Vagina (tissue), 2 donors: ENCODE measurements at regions of chr10 and their contacts with region 1.

Region 1: DNA sequence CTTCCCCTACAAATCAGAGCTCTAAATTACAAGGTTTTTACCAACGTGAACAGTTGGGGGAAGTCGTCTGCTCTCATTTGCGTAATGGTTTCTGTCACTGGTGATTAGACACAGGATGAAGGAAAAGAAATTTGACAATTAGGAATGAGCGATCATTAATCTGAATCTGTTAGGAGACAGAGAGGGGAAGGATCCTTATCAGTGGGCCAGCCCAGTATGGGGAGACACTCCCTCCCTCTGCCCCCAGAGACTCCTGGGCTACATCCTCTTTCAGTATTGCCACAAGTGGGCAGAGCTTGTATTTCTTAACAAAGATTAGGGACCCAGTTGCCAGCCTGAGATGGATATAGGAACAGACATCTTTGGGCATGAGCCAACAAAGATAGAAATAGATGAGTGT is 15.5 kb downstream of the HIF1AN start:
- DNase-seq: no peak
- H3K4me3 ChIP-seq: no peak overlapping the region
- H3K27ac ChIP-seq: no peak overlapping the region
- H3K4me1 ChIP-seq: no peaks in the 10 kb centered on the region
- H3K27me3 ChIP-seq: no peaks in the 10 kb centered on the region
- CTCF ChIP-seq: no peak
- POLR2A ChIP-seq: no peak

Region 2: GRCh38 chr10:100537475-100537874 is 13.7 kb before region 1 on chr10:
- intact Hi-C with region 1: loop called (anchors 1 kb)
- DNase-seq: no peak
- H3K4me3 ChIP-seq: no peak overlapping the region
- H3K27ac ChIP-seq: no peak overlapping the region
- H3K4me1 ChIP-seq: peaks cover 29% of the 10 kb centered on the region
- H3K27me3 ChIP-seq: no peaks in the 10 kb centered on the region
- CTCF ChIP-seq: no peak
- POLR2A ChIP-seq: no peak